ENCODE measurements at regions of chr4 and their contacts with region 1.

Region 1: DNA sequence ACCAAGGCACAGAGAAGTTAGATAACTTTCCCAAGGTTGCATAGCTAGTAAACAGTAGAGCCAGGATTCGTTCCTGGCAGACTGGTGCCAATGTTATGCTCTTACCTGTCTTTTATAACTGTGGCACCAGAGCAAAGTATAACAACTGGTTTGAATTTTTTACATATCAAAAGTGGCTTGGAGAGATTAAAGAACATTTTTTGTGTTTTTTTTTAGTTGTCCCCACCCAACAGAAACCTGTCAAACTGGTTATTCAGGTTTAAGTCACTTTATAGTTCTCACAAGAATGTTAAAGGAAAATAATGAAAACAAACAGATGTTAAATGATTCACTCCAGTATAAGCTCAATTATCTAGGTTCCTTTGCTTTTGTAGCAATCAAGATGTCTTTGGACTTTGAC is 15.6 kb upstream of the FAM47E start:
- DNase-seq: peak in 1 of 2 experiments; percentile 74
- H3K4me3 ChIP-seq: peak overlapping the region; percentile 13; the same call in 1 of the 2 replicates
- H3K4me3 Mint-ChIP-seq: peak overlapping the region; percentile 70
- H3K27ac Mint-ChIP-seq: peak overlapping the region; percentile 95
- H3K4me1 ChIP-seq: peaks cover 59% of the 10 kb centered on the region
- H3K4me1 Mint-ChIP-seq: peaks cover 28% of the 10 kb centered on the region
- H3K27me3 ChIP-seq: no peaks in the 10 kb centered on the region
- H3K27me3 Mint-ChIP-seq: no peaks in the 10 kb centered on the region
- CTCF ChIP-seq: no peak

Region 2: DNA sequence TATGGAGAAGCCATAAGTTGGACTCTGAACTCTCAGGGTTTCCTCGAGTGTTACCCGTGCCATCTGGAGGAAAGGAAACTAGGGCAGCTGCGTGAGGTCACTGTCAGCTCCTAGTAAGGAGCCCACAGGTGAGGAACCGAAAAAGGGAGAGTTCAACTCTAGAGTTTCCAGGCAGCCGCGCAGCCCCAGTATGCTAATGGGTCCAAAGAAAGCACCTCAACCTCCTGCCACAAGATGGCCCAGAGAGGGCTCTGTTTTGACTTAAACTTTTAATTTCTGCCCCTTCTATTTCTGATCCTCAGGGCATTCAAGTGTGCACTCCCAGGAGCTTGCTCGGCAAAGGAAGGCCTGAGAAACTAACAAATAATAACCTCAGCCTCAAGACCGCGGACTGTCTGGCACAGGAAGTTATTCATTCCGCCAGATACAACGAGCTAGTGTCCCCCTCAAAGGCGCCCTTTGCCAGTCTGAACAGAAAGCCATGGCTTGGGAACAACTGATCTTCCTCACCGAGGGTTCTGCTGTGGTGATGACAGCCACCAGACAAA is 36.2 kb before region 1 on chr4:
- CTCF ChIA-PET with region 1: no interaction called
- POLR2A ChIA-PET with region 1: no interaction called
- intact Hi-C with region 1: loop called (anchors 1 kb)
- DNase-seq: no peak
- H3K4me3 ChIP-seq: no peak overlapping the region
- H3K4me3 Mint-ChIP-seq: no peak overlapping the region
- H3K27ac Mint-ChIP-seq: no peak overlapping the region
- H3K4me1 ChIP-seq: peaks cover 31% of the 10 kb centered on the region
- H3K4me1 Mint-ChIP-seq: peaks cover 15% of the 10 kb centered on the region
- H3K27me3 ChIP-seq: no peaks in the 10 kb centered on the region
- H3K27me3 Mint-ChIP-seq: no peaks in the 10 kb centered on the region
- CTCF ChIP-seq: no peak

Region 3: GRCh38 chr4:76213415-76214176 is 22.3 kb before region 1 on chr4 and contains the start of gene SCARB2:
- CTCF ChIA-PET with region 1: interaction called, 4 read pairs
- POLR2A ChIA-PET with region 1: interaction called, 6 read pairs
- intact Hi-C with region 1: loop called (anchors 1 kb)
- DNase-seq: peak; percentile 81 to 91
- H3K4me3 ChIP-seq: peak within 1 kb of the TSS; percentile 84
- H3K4me3 Mint-ChIP-seq: peak within 1 kb of the TSS; percentile 84
- H3K27ac Mint-ChIP-seq: peak within 1 kb of the TSS; percentile 83
- H3K4me1 ChIP-seq: peaks cover 52% of the 10 kb centered on the region
- H3K4me1 Mint-ChIP-seq: peaks cover 56% of the 10 kb centered on the region
- H3K27me3 ChIP-seq: no peaks in the 10 kb centered on the region
- H3K27me3 Mint-ChIP-seq: no peaks in the 10 kb centered on the region
- CTCF ChIP-seq: peak in 1 of 2 experiments; percentile 13
- total RNA-seq, gene SCARB2: 148 and 150 TPM in 2 replicates

Region 4: GRCh38 chr4:76219299-76220055 is 16.4 kb before region 1 on chr4:
- CTCF ChIA-PET with region 1: no interaction called
- POLR2A ChIA-PET with region 1: interaction called, 6 read pairs
- intact Hi-C with region 1: loop called (anchors 1 kb)
- DNase-seq: peak in 1 of 2 experiments; percentile 21
- H3K4me3 ChIP-seq: no peak overlapping the region
- H3K4me3 Mint-ChIP-seq: peak overlapping the region; percentile 51
- H3K27ac Mint-ChIP-seq: peak overlapping the region; percentile 77
- H3K4me1 ChIP-seq: peaks cover 56% of the 10 kb centered on the region
- H3K4me1 Mint-ChIP-seq: peaks cover 46% of the 10 kb centered on the region
- H3K27me3 ChIP-seq: no peaks in the 10 kb centered on the region
- H3K27me3 Mint-ChIP-seq: no peaks in the 10 kb centered on the region
- CTCF ChIP-seq: no peak